Panc1 (cell line): ENCODE measurements at regions of chr4 and their contacts with region 1.

Region 1: GRCh38 chr4:161881370-161881769 is 282.4 kb downstream of the FSTL5 start:
- DNase-seq: no peak
- ATAC-seq: no peak
- H3K4me3 ChIP-seq: no peak overlapping the region
- H3K27ac ChIP-seq: no peak overlapping the region
- H3K4me1 ChIP-seq: no peaks in the 10 kb centered on the region
- H3K27me3 ChIP-seq: no peaks in the 10 kb centered on the region
- CTCF ChIP-seq: no peak

Region 2: DNA sequence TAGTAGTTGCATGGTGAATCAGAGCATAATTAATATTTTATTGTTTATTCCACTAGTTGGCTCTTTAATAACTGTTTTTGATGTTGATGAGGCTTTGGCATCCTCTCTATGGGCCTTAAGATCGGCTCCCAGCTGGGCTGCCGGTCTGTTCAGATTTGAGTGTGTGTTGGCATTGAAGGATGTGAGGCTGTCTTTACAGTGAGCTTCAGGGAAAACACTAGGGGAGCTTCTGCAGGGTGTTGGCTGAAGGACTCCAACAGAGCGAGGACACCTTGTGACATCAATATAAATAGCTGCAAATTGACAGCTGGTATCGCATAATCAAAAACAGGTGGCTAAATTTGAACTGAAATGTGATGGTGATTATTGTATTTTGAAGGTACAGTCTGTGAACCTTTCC is 39.6 kb before region 1 on chr4:
- CTCF ChIA-PET with region 1: no interaction called
- POLR2A ChIA-PET with region 1: no interaction called
- in situ Hi-C with region 1: no loop called
- intact Hi-C with region 1: no loop called
- DNase-seq: no peak
- ATAC-seq: no peak
- H3K4me3 ChIP-seq: no peak overlapping the region
- H3K27ac ChIP-seq: no peak overlapping the region
- H3K4me1 ChIP-seq: no peaks in the 10 kb centered on the region
- H3K27me3 ChIP-seq: no peaks in the 10 kb centered on the region
- CTCF ChIP-seq: no peak

Region 3: DNA sequence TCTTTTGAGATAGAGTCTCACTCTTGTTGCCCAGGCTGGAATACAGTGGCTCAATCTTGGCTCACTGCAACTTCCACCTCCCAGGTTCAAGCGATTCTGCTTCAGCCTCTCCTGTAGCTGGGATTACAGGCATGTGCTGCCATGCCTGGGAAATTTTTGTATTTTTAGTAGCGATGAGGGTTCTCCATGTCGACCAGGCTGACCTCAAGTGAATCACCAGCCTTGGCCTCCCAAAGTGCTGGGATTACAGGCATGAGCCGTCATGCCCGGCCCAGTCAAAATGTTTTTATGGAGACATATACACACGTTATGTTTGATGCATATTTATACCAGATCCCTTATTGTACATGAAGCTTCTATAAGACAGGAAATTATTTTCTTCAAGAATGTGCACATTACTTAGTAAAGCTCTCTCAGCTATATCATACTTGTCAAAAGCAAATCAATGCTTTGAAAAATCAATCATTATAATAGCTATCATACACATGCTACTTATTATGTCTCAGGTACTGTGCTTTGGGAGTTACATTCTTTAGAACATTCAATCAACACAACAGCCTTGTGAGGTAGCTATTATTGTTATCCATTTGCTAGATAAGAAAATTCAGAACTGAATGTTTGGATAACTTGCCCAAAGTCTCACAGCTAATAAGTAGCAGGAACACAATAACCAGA is 13.3 kb after region 1 on chr4:
- CTCF ChIA-PET with region 1: no interaction called
- POLR2A ChIA-PET with region 1: no interaction called
- in situ Hi-C with region 1: no loop called
- intact Hi-C with region 1: loop called (anchors 1 kb)
- DNase-seq: no peak
- ATAC-seq: no peak
- H3K4me3 ChIP-seq: no peak overlapping the region
- H3K27ac ChIP-seq: no peak overlapping the region
- H3K4me1 ChIP-seq: no peaks in the 10 kb centered on the region
- H3K27me3 ChIP-seq: no peaks in the 10 kb centered on the region
- CTCF ChIP-seq: no peak